ENCODE measurements at regions of chr1 and their contacts with region 1.

Region 1: GRCh38 chr1:1059494-1060280 is 14.4 kb downstream of the RNF223 start:
- DNase-seq: peak; percentile 96
- H3K4me3 ChIP-seq: peak overlapping the region; percentile 51 to 56
- H3K27ac ChIP-seq: no peak overlapping the region
- H3K4me1 ChIP-seq: peaks cover 0 to 6% of the 10 kb centered on the region in 2 experiments; a peak in 1 of 4 replicates
- H3K27me3 ChIP-seq: peaks cover 20% of the 10 kb centered on the region; the same call in 1 of the 2 replicates
- CTCF ChIP-seq: no peak
- EP300 ChIP-seq: no peak
- RAD21 ChIP-seq: no peak

Region 2: DNA sequence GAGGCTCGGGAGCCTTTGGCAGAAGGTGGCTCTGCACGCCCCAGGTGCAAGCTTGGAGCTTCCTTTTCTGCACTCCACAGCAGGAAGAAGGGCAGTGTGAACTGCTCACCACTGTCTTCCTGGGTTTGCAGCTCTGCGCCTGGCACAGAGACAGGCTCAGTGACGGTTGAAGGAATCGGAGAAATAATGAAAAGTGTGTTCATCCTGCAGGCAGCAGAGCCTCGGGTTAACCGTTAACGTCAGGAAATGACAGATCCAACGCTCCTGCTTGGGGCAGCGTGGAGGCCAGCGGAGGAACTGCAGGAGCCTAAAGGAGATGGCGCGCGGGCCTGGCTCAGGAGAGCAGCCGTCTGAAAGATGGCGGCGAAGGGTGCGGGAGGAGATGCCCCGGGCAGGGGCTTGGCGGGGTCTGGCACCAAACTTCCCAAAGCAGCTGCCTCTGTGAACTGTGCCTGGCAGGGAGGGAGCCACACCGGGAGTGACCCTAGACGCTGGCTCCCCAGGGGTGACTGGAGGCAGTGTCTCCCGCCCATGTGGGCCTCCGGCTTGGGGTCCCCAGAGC is 146.9 kb before region 1 on chr1:
- CTCF ChIA-PET with region 1: no interaction called
- POLR2A ChIA-PET with region 1: no interaction called
- DNase-seq: no peak
- H3K4me3 ChIP-seq: no peak overlapping the region
- H3K27ac ChIP-seq: no peak overlapping the region
- H3K4me1 ChIP-seq: peaks cover 0 to 32% of the 10 kb centered on the region in 2 experiments; a peak in 2 of 4 replicates
- H3K27me3 ChIP-seq: no peaks in the 10 kb centered on the region
- CTCF ChIP-seq: no peak
- EP300 ChIP-seq: no peak
- RAD21 ChIP-seq: no peak

Region 3: GRCh38 chr1:1013105-1013921 is 46.4 kb before region 1 on chr1 and contains the start of gene ISG15:
- CTCF ChIA-PET with region 1: interaction called, 14 read pairs
- POLR2A ChIA-PET with region 1: no interaction called
- DNase-seq: no peak
- H3K4me3 ChIP-seq: peak within 1 kb of the TSS; percentile 45 to 52; a peak in 3 of 4 replicates
- H3K27ac ChIP-seq: peak within 1 kb of the TSS in 1 of 2 experiments; percentile 70; a peak in 2 of 4 replicates
- H3K4me1 ChIP-seq: peaks cover 0 to 7% of the 10 kb centered on the region in 2 experiments; a peak in 1 of 4 replicates
- H3K27me3 ChIP-seq: no peaks in the 10 kb centered on the region
- CTCF ChIP-seq: no peak
- EP300 ChIP-seq: no peak
- RAD21 ChIP-seq: no peak
- polyA plus RNA-seq, gene ISG15: 22.9 and 28.6 TPM in 2 replicates

Region 4: GRCh38 chr1:1024771-1025451 is 34.8 kb before region 1 on chr1:
- CTCF ChIA-PET with region 1: interaction called, 10 read pairs
- POLR2A ChIA-PET with region 1: no interaction called
- DNase-seq: no peak
- H3K4me3 ChIP-seq: no peak overlapping the region
- H3K27ac ChIP-seq: no peak overlapping the region
- H3K4me1 ChIP-seq: peaks cover 0 to 10% of the 10 kb centered on the region in 2 experiments; a peak in 1 of 4 replicates
- H3K27me3 ChIP-seq: no peaks in the 10 kb centered on the region
- CTCF ChIP-seq: no peak
- EP300 ChIP-seq: no peak
- RAD21 ChIP-seq: no peak

Region 5: DNA sequence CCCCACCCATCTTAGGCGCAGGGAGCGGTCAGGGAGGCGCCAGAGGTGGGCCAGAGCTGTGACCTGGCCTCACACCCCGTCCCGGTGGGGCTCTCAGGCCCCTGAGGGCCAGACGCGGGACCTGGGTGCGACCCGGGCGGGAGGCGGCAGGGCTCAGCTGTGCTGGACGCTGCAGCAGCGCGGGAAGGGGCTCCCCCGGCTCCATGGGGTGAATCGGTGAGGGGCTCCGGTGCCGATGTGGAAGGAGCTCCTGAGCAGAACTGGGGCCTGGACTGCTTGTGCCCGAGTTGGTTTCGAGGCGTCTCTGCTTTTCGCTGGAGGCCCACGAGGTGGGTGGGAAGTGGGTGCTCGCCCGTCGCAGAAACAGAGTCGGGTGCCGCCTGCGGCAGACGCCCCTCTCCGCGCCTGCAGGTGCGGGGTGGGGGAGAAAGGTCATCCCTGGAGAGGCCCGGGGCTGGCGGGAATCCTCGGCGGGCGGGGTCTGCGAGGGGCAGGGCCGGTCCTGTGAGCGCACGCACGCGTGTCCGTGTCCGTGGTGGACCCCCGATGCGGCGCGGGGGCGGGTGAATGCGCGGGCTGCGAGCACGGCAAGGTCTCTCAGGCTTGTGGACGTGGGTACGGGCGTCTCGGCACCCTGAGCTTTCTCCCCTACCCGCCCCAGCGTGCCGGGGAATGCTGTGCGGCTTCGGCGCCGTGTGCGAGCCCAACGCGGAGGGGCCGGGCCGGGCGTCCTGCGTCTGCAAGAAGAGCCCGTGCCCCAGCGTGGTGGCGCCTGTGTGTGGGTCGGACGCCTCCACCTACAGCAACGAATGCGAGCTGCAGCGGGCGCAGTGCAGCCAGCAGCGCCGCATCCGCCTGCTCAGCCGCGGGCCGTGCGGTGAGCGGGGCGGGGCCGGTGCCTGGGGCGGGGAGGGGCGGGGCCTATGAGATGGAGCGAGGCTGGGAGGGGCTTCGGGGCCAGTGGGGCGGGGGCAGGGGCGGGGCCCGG is 19.4 kb before region 1 on chr1:
- CTCF ChIA-PET with region 1: interaction called, 43 read pairs
- POLR2A ChIA-PET with region 1: no interaction called
- DNase-seq: peak; percentile 98
- H3K4me3 ChIP-seq: peak overlapping the region; percentile 39 to 41; a peak in 3 of 4 replicates
- H3K27ac ChIP-seq: no peak overlapping the region
- H3K4me1 ChIP-seq: peaks cover 0 to 18% of the 10 kb centered on the region in 2 experiments; a peak in 1 of 4 replicates
- H3K27me3 ChIP-seq: no peaks in the 10 kb centered on the region
- CTCF ChIP-seq: 0 out of 2 replicates have a peak, but pooled peaks have one; percentile 8
- EP300 ChIP-seq: no peak
- RAD21 ChIP-seq: no peak; the same call in 1 of the 2 replicates